CD14-positive monocyte (primary cell): ENCODE measurements at regions of chr7 and their contacts with region 1.

Region 1: DNA sequence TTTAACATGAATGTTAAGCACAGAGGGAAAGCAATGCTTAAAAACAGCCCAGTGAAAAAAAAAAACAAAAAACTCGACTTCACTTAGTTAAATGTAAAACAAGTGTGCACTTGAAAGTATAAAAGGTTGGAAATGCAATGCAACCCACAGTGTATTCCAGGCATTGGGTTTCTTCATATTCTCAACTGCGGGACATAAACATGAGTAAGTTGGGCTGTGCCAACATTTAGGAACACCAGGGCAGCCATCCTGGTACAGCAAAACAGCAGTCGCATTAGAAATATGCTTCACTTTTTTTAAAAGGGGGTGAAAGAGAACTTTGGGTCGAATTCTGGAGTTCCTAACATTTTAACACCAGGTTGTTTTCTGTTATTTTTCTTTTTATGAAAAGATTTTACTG is 937 bp downstream of the STEAP1 start:
- DNase-seq: no peak
- H3K4me3 ChIP-seq: no peak overlapping the region
- H3K4me3 Mint-ChIP-seq: peak overlapping the region in 1 of 2 donors; percentile 49
- H3K27ac ChIP-seq: no peak overlapping the region
- H3K27ac Mint-ChIP-seq: no peak overlapping the region
- H3K4me1 ChIP-seq: peaks cover 4 to 8% of the 10 kb centered on the region in 2 donors
- H3K4me1 Mint-ChIP-seq: peaks cover 8% of the 10 kb centered on the region
- H3K27me3 ChIP-seq: peaks cover 8 to 18% of the 10 kb centered on the region in 2 donors
- H3K27me3 Mint-ChIP-seq: peaks cover 15 to 38% (median 26%) of the 10 kb centered on the region in 3 donors
- CTCF ChIP-seq: no peak

Region 2: DNA sequence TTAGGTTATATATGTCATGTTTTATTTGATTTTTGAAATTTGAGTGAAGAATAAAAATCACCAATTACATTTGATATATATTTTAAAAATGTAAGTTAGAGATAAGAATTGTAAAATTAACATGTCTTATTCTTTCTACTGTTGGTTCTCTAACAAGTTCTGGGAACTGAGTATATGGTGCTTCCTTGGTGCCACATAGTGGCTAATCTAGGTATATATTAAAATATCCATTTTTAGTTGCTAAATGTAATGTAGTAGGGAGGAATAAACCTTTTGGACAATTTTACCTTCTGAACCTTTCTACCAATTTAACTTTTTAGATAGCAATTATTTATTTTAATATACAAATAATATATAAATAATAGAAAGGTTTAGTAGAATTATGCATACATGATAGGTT is 107.2 kb after region 1 on chr7:
- intact Hi-C with region 1: loop called in 1 of 2 experiments (anchors 10 kb)
- DNase-seq: peak in 1 of 3 donors; percentile 4
- H3K4me3 ChIP-seq: no peak overlapping the region
- H3K4me3 Mint-ChIP-seq: no peak overlapping the region
- H3K27ac ChIP-seq: no peak overlapping the region
- H3K27ac Mint-ChIP-seq: no peak overlapping the region
- H3K4me1 ChIP-seq: no peaks in the 10 kb centered on the region
- H3K4me1 Mint-ChIP-seq: no peaks in the 10 kb centered on the region
- H3K27me3 ChIP-seq: no peaks in the 10 kb centered on the region
- H3K27me3 Mint-ChIP-seq: peaks cover 2 to 5% (median 3%) of the 10 kb centered on the region in 3 donors
- CTCF ChIP-seq: peak; percentile 63

Region 3: GRCh38 chr7:90424720-90425119 is 269.5 kb after region 1 on chr7:
- intact Hi-C with region 1: loop called (anchors 1 to 2 kb)
- DNase-seq: no peak
- H3K4me3 ChIP-seq: no peak overlapping the region
- H3K4me3 Mint-ChIP-seq: no peak overlapping the region
- H3K27ac ChIP-seq: no peak overlapping the region
- H3K27ac Mint-ChIP-seq: no peak overlapping the region
- H3K4me1 ChIP-seq: no peaks in the 10 kb centered on the region
- H3K4me1 Mint-ChIP-seq: no peaks in the 10 kb centered on the region
- H3K27me3 ChIP-seq: no peaks in the 10 kb centered on the region
- H3K27me3 Mint-ChIP-seq: peaks cover 0 to 2% (median 0%) of the 10 kb centered on the region in 3 donors
- CTCF ChIP-seq: no peak